ENCODE measurements at regions of chr5 and their contacts with region 1.

Region 1: GRCh38 chr5:149485655-149486425 is 65.4 kb downstream of the CSNK1A1 start:
- DNase-seq: peak; percentile 47 to 94
- ATAC-seq: peak; percentile 84 to 92 (median 90)
- H3K4me3 ChIP-seq: no peak overlapping the region
- H3K27ac ChIP-seq: peak overlapping the region; percentile 82 to 94 (median 90)
- H3K4me1 ChIP-seq: peaks cover 21 to 64% (median 48%) of the 10 kb centered on the region in 9 donors
- H3K27me3 ChIP-seq: no peaks in the 10 kb centered on the region
- CTCF ChIP-seq: no peak

Region 2: DNA sequence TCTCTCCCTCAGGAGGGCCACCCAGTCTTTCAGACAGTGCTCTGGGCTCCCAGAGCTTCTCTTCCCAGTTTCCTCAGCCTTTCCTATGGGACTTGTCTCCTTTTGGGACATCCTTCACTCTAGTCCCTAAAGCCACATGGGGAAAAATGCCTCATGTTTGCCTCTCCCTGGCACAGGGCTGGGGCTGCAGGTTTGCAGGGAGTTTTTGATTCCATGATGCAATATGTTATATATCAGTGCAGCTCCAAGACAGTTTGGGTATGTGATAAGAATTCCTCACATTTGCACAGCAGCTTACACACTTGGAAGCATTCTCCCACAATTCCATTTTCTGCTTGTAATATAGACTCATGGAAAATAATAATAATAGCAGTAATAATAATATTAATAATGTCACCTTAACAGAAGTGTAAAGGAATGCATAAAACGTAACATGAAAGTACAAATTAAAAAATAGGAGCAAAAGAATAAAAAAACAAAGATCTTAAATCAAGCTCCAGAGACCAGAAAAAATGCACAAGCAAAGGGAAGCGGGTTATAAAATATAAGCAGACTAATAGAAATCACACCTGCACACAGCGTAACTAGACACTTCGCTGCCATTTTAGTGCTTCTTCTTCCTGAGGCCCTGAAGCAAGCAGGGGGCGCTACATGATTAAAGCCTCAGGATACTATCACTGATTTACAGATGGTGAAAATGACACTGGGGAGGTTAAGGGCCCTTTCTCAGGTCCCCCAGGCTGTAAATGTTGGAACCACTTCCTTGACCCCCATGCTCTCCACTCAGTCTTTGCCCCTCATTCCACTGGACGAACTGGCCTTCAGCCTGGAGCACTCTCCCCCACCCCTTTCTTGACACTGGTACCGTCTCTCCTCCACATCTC is 36.8 kb before region 1 on chr5:
- intact Hi-C with region 1: loop called in 5 of 10 experiments (anchors 2 to 5 kb)
- DNase-seq: no peak
- ATAC-seq: no peak
- H3K4me3 ChIP-seq: no peak overlapping the region
- H3K27ac ChIP-seq: peak overlapping the region in 9 of 10 donors; percentile 83 to 93 (median 88)
- H3K4me1 ChIP-seq: peaks cover 44 to 88% (median 79%) of the 10 kb centered on the region in 9 donors
- H3K27me3 ChIP-seq: no peaks in the 10 kb centered on the region
- CTCF ChIP-seq: peak in 6 of 9 donors; percentile 25 to 42 (median 34)

Region 3: GRCh38 chr5:149455889-149456409 is 29.9 kb before region 1 on chr5:
- intact Hi-C with region 1: loop called in 2 of 10 experiments (anchors 2 to 5 kb)
- DNase-seq: peak; percentile 64 to 71
- ATAC-seq: peak; percentile 44 to 66 (median 58)
- H3K4me3 ChIP-seq: no peak overlapping the region
- H3K27ac ChIP-seq: peak overlapping the region; percentile 70 to 93 (median 84)
- H3K4me1 ChIP-seq: peaks cover 38 to 70% (median 56%) of the 10 kb centered on the region in 9 donors
- H3K27me3 ChIP-seq: no peaks in the 10 kb centered on the region
- CTCF ChIP-seq: no peak

Region 4: GRCh38 chr5:149551200-149552037 is 65.6 kb after region 1 on chr5 and contains the start of gene CSNK1A1:
- intact Hi-C with region 1: loop called in 4 of 10 experiments (anchors 2 to 10 kb)
- DNase-seq: peak; percentile 98 to 99
- ATAC-seq: peak; percentile 96 to 99 (median 98)
- H3K4me3 ChIP-seq: peak within 1 kb of the TSS; percentile 53 to 99 (median 84)
- H3K27ac ChIP-seq: peak within 1 kb of the TSS; percentile 88 to 100 (median 99)
- H3K4me1 ChIP-seq: peaks cover 7 to 49% (median 40%) of the 10 kb centered on the region in 9 donors
- H3K27me3 ChIP-seq: no peaks in the 10 kb centered on the region
- CTCF ChIP-seq: peak; percentile 64 to 87 (median 81)
- total RNA-seq, gene CSNK1A1: 174 to 363 (median 224) TPM

Measured in heart right ventricle (tissue), 16 donors.